ENCODE measurements at regions of chr3 and their contacts with region 1.

Region 1: GRCh38 chr3:25594007-25594502 is 70.7 kb downstream of the TOP2B start:
- DNase-seq: peak in 1 of 2 experiments; percentile 49
- H3K4me3 ChIP-seq: no peak overlapping the region
- H3K4me3 Mint-ChIP-seq: no peak overlapping the region
- H3K27ac Mint-ChIP-seq: no peak overlapping the region
- H3K4me1 ChIP-seq: peaks cover 8% of the 10 kb centered on the region; the same call in 1 of the 2 replicates
- H3K4me1 Mint-ChIP-seq: no peaks in the 10 kb centered on the region
- H3K27me3 ChIP-seq: no peaks in the 10 kb centered on the region
- H3K27me3 Mint-ChIP-seq: no peaks in the 10 kb centered on the region
- CTCF ChIP-seq: peak; percentile 65 to 83

Region 2: DNA sequence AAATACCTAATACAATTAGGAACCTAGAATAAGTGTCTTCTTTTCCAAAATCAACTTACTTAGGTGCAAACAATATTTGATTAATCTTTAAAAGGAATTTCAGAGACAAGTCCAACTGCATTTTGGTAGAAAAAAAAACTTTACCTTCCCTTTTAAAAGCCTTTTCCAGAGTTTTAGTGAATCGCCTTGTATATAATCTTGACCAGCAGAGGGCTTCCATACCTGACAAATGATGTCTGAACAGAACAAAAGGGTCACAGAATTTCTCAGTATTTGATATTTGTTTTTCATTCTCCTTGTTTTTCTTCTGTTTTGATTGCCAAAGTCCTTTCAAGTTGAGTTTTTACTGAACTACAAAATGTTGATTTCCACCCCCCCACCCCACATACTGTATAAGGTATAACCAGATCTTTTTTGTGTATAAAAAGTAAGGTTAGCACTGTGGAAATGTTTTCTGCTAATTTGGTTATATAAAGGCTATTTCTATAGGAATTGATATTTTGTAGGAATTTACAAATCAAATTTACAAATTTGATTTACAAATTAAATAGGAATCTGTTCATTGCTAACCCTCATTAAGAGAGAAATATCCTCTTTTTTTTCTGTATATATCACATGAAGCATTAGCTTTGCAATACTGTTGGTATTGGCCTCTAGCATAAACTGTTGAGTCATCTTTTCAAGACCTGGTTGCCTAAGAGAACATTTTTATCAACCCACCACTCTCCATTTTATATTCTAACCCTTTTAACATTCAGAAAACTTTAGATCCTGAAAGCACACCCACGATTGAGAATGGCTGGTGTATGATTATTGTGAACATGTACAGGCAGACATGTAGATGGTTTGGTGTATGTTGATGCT is 630.1 kb before region 1 on chr3:
- CTCF ChIA-PET with region 1: no interaction called
- POLR2A ChIA-PET with region 1: no interaction called
- intact Hi-C with region 1: loop called (anchors 1 kb)
- DNase-seq: peak in 1 of 2 experiments; percentile 35
- H3K4me3 ChIP-seq: no peak overlapping the region
- H3K4me3 Mint-ChIP-seq: no peak overlapping the region
- H3K27ac Mint-ChIP-seq: no peak overlapping the region
- H3K4me1 ChIP-seq: no peaks in the 10 kb centered on the region
- H3K4me1 Mint-ChIP-seq: peaks cover 10% of the 10 kb centered on the region
- H3K27me3 ChIP-seq: no peaks in the 10 kb centered on the region; the same call in 1 of the 2 replicates
- H3K27me3 Mint-ChIP-seq: no peaks in the 10 kb centered on the region
- CTCF ChIP-seq: peak; percentile 53 to 69

Region 3: DNA sequence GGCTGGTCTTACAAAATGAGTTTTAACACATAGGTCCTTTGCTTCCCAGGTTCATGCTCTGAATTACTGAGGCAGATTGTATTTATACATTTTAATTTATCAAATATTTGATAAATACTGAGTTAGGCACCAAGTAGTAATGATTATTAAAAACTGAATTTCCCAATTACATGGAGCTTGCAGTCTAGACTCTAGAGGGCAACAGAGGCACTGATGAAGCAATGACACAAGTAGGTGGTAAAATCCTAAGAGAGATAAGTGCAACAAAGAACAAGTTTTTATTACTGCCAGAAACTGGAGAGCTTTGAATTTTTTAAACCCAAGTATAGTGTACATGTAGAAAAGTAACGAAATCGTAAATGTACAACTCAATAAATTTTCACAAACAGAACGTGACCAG is 572.2 kb before region 1 on chr3:
- CTCF ChIA-PET with region 1: interaction called, 4 read pairs
- POLR2A ChIA-PET with region 1: no interaction called
- intact Hi-C with region 1: loop called (anchors 1 kb)
- DNase-seq: peak in 1 of 2 experiments; percentile 19
- H3K4me3 ChIP-seq: no peak overlapping the region
- H3K4me3 Mint-ChIP-seq: no peak overlapping the region
- H3K27ac Mint-ChIP-seq: no peak overlapping the region
- H3K4me1 ChIP-seq: no peaks in the 10 kb centered on the region
- H3K4me1 Mint-ChIP-seq: no peaks in the 10 kb centered on the region
- H3K27me3 ChIP-seq: no peaks in the 10 kb centered on the region
- H3K27me3 Mint-ChIP-seq: no peaks in the 10 kb centered on the region
- CTCF ChIP-seq: peak; percentile 47 to 76

Region 4: GRCh38 chr3:25156626-25157025 is 437.4 kb before region 1 on chr3:
- CTCF ChIA-PET with region 1: no interaction called
- POLR2A ChIA-PET with region 1: no interaction called
- intact Hi-C with region 1: loop called (anchors 10 kb)
- DNase-seq: peak in 1 of 2 experiments; percentile 32
- H3K4me3 ChIP-seq: no peak overlapping the region
- H3K4me3 Mint-ChIP-seq: no peak overlapping the region
- H3K27ac Mint-ChIP-seq: no peak overlapping the region
- H3K4me1 ChIP-seq: peaks cover 7% of the 10 kb centered on the region; the same call in 1 of the 2 replicates
- H3K4me1 Mint-ChIP-seq: no peaks in the 10 kb centered on the region
- H3K27me3 ChIP-seq: no peaks in the 10 kb centered on the region
- H3K27me3 Mint-ChIP-seq: no peaks in the 10 kb centered on the region
- CTCF ChIP-seq: no peak